CD4-positive, alpha-beta T cell (primary cell): ENCODE measurements at regions of chr1 and their contacts with region 1.

Region 1: DNA sequence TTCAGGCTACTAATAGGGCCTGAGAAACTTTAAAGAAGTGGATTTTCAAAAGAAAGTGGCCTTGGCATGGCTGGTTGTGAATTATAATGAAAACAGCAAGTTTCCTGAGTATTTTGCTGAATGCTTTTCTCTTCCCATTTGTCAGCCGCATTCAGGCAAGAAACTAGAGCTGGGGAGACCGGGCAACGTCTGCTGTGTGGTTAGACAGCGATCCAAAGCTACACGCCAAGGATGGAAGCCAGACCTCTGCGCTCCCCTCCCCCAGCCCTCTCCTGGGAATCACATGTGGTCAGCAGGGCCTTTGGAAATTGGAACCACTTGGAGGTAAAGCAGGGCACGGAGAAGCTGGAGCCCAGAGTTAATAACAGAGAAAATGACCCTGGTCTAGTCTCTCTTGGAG is 114.1 kb upstream of the CD34 start:
- DNase-seq: no peak
- ATAC-seq: no peak
- H3K4me3 ChIP-seq: no peak overlapping the region
- H3K4me3 Mint-ChIP-seq: no peak overlapping the region
- H3K27ac ChIP-seq: no peak overlapping the region
- H3K27ac Mint-ChIP-seq: no peak overlapping the region
- H3K4me1 ChIP-seq: no peaks in the 10 kb centered on the region
- H3K4me1 Mint-ChIP-seq: no peaks in the 10 kb centered on the region
- H3K27me3 ChIP-seq: no peaks in the 10 kb centered on the region
- H3K27me3 Mint-ChIP-seq: no peaks in the 10 kb centered on the region
- CTCF ChIP-seq: no peak

Region 2: DNA sequence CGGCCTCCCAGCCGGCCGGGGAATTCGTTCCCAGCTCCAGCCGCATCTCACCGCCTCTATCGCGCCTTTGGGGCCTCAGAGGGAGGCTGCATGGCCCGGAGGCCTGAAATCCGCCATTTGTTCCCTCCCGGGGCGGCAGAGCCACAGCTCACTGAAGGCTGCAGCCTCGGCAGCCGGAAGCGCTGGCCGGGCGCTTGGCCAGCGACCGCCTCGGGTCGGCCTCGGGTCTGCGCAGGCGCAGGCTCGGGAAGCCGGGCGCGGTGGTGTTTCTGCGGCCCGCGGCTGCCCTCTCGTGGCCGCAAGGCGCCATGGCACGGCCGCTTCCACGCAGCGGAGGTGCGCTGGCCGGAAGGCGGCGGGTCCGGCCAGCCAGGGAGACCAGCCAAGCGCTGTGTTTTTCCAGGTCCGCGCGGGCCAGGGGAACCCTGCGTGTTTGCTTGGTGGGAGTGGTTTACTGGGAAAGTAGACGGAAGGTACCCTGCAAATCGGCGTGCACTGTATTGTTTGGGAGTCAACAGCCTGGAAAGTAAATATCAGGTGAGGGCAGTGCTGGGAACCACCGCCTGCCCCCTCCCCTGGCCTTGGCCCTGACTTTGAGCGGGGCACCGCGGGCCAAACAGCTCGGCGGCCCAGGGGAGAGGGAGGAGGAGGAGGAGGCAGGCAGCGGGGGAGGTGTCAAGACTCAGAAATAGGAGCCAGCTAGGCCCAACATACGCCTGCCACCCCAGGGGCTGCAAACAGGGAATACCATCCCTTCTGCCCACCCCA is 61.4 kb before region 1 on chr1:
- CTCF ChIA-PET with region 1: no interaction called
- POLR2A ChIA-PET with region 1: no interaction called
- intact Hi-C with region 1: no loop called
- DNase-seq: peak; percentile 61 to 92 (median 79)
- ATAC-seq: peak; percentile 90
- H3K4me3 ChIP-seq: peak overlapping the region; percentile 86
- H3K4me3 Mint-ChIP-seq: peak overlapping the region; percentile 79
- H3K27ac ChIP-seq: no peak overlapping the region
- H3K27ac Mint-ChIP-seq: no peak overlapping the region
- H3K4me1 ChIP-seq: peaks cover 23% of the 10 kb centered on the region
- H3K4me1 Mint-ChIP-seq: peaks cover 8% of the 10 kb centered on the region
- H3K27me3 ChIP-seq: peaks cover 15 to 27% of the 10 kb centered on the region in 2 experiments
- H3K27me3 Mint-ChIP-seq: peaks cover 31% of the 10 kb centered on the region
- CTCF ChIP-seq: peak; percentile 97

Region 3: DNA sequence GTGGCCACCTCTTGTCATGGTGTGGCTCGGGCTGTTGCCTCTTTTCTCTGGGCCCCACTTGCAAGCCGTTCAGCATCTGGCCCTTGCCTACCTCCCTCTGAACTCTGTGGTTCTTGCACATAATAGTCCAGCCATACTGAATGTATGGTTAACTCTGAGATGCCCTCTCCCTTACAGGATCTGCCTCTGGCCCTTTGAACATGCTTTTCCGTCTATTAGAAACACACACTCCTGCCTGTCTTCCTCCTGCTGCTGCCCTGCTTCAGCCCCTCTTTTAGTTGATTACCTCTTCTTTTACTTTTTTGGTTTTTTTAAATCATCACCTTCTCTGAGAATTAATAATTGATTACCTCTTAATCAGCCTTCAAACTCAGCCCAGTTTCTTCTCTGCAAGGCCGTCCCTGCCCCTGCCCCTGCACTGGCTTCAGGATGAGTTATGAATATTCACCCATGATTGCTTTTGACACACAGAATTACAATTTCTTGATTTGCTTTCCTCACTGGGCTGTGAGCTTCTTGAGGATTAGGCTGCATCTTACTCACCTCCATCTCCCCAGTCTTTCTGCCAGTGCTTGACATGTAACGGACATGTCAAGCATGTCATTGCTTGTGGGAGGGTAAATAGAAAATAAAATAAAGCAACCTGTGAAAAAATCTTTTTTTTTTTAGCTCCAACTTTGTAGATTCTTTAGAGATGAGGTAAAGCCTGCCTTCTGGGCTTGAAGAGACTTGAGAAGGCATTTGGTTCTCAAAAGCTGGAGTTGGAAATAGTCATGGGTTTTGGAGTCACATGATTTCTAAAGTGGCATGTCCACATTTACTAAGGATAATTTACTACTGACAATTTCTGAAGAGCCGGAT is 60.9 kb after region 1 on chr1:
- CTCF ChIA-PET with region 1: interaction called, 11 read pairs
- POLR2A ChIA-PET with region 1: interaction called, 3 read pairs
- intact Hi-C with region 1: no loop called
- DNase-seq: no peak
- ATAC-seq: no peak
- H3K4me3 ChIP-seq: peak overlapping the region; percentile 46
- H3K4me3 Mint-ChIP-seq: peak overlapping the region; percentile 76
- H3K27ac ChIP-seq: peak overlapping the region in 1 of 2 donors; percentile 41
- H3K27ac Mint-ChIP-seq: peak overlapping the region; percentile 92
- H3K4me1 ChIP-seq: peaks cover 12% of the 10 kb centered on the region
- H3K4me1 Mint-ChIP-seq: peaks cover 29% of the 10 kb centered on the region
- H3K27me3 ChIP-seq: no peaks in the 10 kb centered on the region
- H3K27me3 Mint-ChIP-seq: no peaks in the 10 kb centered on the region
- CTCF ChIP-seq: no peak

Region 4: DNA sequence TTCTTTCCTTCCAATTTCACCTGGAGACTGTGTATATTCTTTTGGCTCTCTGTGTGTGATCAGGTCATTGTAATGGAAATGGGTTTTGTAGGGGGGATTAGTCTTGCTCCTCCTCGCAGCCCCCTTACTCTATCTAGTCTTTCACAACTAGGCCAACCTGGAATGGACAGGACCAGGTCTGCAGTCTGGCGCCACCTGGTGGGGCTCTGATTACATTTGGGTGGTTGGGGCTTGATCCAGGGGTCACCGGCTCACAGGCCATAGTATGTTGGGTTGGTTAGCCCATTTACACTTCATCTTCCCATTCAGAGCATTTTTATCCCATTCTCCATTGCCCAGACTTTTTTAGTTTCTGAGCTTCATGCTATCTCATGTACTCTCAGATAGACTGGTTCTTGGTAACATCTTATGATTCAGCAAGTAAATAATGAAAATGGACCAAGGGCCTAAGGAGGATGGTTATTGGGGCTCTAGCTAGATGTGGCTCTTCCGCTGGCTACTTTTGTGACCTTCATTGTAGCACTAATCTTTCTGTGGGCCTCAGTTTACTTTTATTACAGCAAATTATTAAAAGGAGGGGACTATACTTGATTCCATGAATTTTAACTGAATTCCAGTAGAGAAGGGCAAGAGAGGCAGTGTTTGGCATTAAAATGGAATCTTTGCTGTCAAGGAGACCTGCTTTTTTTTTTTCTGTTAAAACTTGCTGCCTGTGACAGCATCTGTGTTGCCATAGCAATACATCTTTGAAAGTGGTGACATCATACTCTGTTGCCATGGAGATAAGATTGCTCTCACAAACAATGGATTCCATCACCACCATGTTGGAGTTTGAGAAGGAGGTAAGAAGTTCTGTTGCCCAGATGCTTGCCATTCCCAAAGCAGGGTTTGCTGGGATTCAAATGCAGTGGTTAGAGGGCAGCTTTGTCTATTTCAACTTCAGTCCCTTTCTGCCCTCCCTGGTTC is 69.0 kb after region 1 on chr1:
- CTCF ChIA-PET with region 1: interaction called, 24 read pairs
- POLR2A ChIA-PET with region 1: interaction called, 3 read pairs
- intact Hi-C with region 1: loop called (anchors 1 kb)
- DNase-seq: peak; percentile 31 to 73 (median 48)
- ATAC-seq: peak; percentile 43
- H3K4me3 ChIP-seq: no peak overlapping the region
- H3K4me3 Mint-ChIP-seq: no peak overlapping the region
- H3K27ac ChIP-seq: no peak overlapping the region
- H3K27ac Mint-ChIP-seq: no peak overlapping the region
- H3K4me1 ChIP-seq: no peaks in the 10 kb centered on the region
- H3K4me1 Mint-ChIP-seq: no peaks in the 10 kb centered on the region
- H3K27me3 ChIP-seq: no peaks in the 10 kb centered on the region
- H3K27me3 Mint-ChIP-seq: peaks cover 4% of the 10 kb centered on the region
- CTCF ChIP-seq: peak; percentile 70

Region 5: GRCh38 chr1:208245185-208245705 is 220.2 kb after region 1 on chr1:
- CTCF ChIA-PET with region 1: interaction called, 38 read pairs
- POLR2A ChIA-PET with region 1: interaction called, 14 read pairs
- intact Hi-C with region 1: loop called (anchors 1 kb)
- DNase-seq: peak; percentile 52 to 86 (median 70)
- ATAC-seq: peak; percentile 66
- H3K4me3 ChIP-seq: peak overlapping the region; percentile 77
- H3K4me3 Mint-ChIP-seq: peak overlapping the region; percentile 91
- H3K27ac ChIP-seq: peak overlapping the region in 1 of 2 donors; percentile 23
- H3K27ac Mint-ChIP-seq: peak overlapping the region; percentile 12
- H3K4me1 ChIP-seq: peaks cover 15% of the 10 kb centered on the region
- H3K4me1 Mint-ChIP-seq: peaks cover 10% of the 10 kb centered on the region
- H3K27me3 ChIP-seq: peaks cover 17 to 27% of the 10 kb centered on the region in 2 experiments
- H3K27me3 Mint-ChIP-seq: peaks cover 22% of the 10 kb centered on the region
- CTCF ChIP-seq: peak; percentile 82

Region 6: DNA sequence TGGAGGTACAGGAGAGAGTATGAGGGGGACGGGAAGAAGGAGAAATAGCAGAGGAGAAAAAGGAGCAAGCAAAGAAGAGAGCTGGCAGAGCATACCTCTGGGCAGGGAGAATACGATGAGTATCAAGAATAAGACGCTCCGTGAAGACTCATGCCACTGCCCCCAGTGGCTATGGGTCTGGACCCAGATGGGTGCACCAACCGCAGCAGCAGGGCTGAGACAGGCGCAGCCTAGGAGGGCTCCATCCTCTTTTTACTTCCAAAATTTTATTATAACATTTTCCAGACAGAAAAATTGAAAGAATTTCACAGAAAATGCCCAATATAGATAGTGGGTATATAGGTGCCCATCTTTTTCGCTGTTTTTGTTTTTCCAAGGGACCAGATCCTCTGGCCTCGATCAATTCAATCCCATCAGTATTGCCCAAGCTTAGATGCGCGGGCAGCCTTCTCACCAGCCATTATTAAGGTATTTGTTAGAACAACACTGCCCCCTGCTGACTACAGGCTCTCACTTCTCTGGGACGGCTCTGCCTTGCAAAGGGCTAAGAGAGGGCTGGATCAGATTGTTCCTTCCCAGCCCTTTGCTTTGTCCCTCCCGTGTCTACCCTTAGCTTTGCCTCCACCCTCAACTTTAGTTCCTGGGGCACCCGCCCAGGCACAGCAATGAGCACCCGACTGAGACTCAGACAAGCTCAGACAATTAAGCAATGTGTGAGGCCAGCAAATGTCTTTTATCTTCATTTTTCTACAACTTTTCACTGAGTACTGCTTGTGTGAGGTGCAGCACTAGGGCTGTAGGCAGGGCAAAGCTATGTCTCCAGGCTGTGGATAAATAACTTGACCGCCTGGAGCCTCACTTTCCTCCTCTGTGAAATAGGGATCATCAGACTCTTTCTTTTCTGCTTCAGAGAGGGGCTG is 1541.0 kb after region 1 on chr1:
- CTCF ChIA-PET with region 1: no interaction called
- POLR2A ChIA-PET with region 1: no interaction called
- intact Hi-C with region 1: loop called in 1 of 2 experiments (anchors 5 kb)
- DNase-seq: peak; percentile 49 to 84 (median 62)
- ATAC-seq: peak; percentile 89
- H3K4me3 ChIP-seq: no peak overlapping the region
- H3K4me3 Mint-ChIP-seq: no peak overlapping the region
- H3K27ac ChIP-seq: no peak overlapping the region
- H3K27ac Mint-ChIP-seq: no peak overlapping the region
- H3K4me1 ChIP-seq: peaks cover 8% of the 10 kb centered on the region
- H3K4me1 Mint-ChIP-seq: peaks cover 12% of the 10 kb centered on the region
- H3K27me3 ChIP-seq: no peaks in the 10 kb centered on the region
- H3K27me3 Mint-ChIP-seq: peaks cover 67% of the 10 kb centered on the region
- CTCF ChIP-seq: peak; percentile 74